ENCODE measurements at regions of chr1 and their contacts with region 1.

Region 1: GRCh38 chr1:15046487-15047165 is 106.9 kb upstream of the TMEM51 start:
- DNase-seq: peak; percentile 67
- H3K4me3 ChIP-seq: no peak overlapping the region
- H3K27ac ChIP-seq: no peak overlapping the region
- H3K4me1 ChIP-seq: peaks cover 4% of the 10 kb centered on the region
- H3K27me3 ChIP-seq: no peaks in the 10 kb centered on the region
- CTCF ChIP-seq: peak; percentile 86 to 98

Region 2: DNA sequence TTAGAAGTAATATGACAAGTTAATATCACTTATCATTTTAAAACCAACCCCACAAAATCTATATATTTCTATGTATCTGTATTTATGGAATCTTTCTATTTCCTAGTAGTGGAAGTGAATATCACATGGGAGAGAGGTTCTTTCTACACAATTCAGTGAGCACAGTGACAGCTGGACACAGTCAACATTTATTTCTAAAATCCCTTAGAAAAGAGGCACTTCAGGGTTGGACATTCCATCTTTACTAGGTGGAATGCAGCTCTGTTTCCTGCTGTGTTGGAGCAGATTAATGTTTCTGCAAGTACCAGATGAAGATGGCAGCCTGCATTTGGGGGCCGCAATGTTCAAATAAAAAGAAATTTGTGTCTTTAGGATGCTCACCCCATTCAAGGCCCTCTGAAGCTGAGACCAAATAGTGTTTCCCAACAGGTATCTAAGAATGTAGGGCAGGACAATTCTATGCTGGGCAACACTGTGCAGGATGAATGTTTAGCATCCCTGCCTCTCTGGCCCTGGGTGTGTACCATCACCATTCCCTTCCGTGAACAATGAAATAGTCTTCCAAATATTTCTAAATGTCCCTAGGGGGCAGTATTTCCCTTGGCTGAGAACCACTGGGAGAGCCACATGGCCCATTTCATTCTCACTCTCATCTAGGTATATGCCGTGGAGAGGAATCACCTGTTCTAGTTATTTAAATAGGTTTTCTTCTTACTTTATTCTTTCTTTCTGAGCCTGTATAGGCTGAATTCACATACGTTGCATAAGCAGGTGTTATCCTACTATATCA is 951.8 kb before region 1 on chr1:
- CTCF ChIA-PET with region 1: no interaction called
- dilution Hi-C with region 1: no loop called
- in situ Hi-C with region 1: loop called (anchors 25 kb)
- intact Hi-C with region 1: loop called (anchors 5 kb)
- DNase-seq: peak; percentile 9
- H3K4me3 ChIP-seq: no peak overlapping the region
- H3K27ac ChIP-seq: no peak overlapping the region
- H3K4me1 ChIP-seq: no peaks in the 10 kb centered on the region
- H3K27me3 ChIP-seq: no peaks in the 10 kb centered on the region
- CTCF ChIP-seq: peak; percentile 40 to 51

Region 3: GRCh38 chr1:14598497-14599172 is 448.0 kb before region 1 on chr1 and contains the start of gene KAZN:
- CTCF ChIA-PET with region 1: no interaction called
- dilution Hi-C with region 1: no loop called
- in situ Hi-C with region 1: loop called in 1 of 2 experiments (anchors 25 kb)
- intact Hi-C with region 1: no loop called
- DNase-seq: no peak
- H3K4me3 ChIP-seq: peak within 1 kb of the TSS in 2 of 3 experiments; percentile 8 to 27
- H3K27ac ChIP-seq: no peak within 1 kb of the TSS
- H3K4me1 ChIP-seq: peaks cover 10% of the 10 kb centered on the region
- H3K27me3 ChIP-seq: peaks cover 26% of the 10 kb centered on the region
- CTCF ChIP-seq: no peak
- total RNA-seq, gene KAZN: 13.8 to 17.6 TPM

Region 4: DNA sequence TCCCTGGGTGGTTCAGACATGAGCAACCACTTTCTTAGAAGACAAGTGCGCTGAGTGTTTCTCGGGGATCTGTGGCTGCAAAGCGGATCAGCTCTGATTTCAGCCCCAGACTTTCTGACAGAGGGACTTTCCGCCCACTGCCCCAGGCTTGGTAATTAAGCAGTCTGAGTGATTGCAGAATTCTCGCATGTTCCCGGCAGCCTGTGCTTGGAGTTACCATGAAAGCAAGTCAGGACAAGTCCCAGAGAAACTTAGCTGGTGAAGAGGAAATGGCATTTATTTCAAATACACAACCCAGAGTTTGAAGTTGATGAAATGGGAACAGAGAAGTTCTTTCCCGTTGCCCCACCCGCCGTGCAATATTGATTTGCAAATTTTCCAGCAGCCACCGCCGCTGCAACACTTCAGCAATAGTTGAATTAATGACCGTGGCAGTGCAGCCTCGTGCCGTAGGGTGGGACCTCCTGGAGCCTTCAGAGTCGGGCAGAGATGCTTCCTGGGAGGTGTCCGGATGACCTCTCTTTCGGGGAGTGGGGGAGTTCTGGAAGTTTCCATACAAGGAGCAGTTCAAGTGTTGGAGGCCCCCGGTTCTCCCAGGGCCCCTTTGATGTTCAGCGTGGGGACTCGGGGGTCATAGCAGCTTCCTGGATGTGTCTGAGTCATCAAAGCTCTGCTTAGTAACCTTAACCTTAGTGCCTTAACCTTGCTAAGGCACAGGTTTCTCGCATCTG is 313.4 kb before region 1 on chr1:
- CTCF ChIA-PET with region 1: no interaction called
- dilution Hi-C with region 1: no loop called
- in situ Hi-C with region 1: no loop called
- intact Hi-C with region 1: loop called (anchors 1 kb)
- DNase-seq: peak; percentile 96
- H3K4me3 ChIP-seq: peak overlapping the region; percentile 1 to 26 (median 9)
- H3K27ac ChIP-seq: peak overlapping the region; percentile 98
- H3K4me1 ChIP-seq: peaks cover 27% of the 10 kb centered on the region
- H3K27me3 ChIP-seq: no peaks in the 10 kb centered on the region
- CTCF ChIP-seq: no peak

Region 5: GRCh38 chr1:14778898-14779865 is 267.4 kb before region 1 on chr1:
- CTCF ChIA-PET with region 1: interaction called, 7 read pairs
- dilution Hi-C with region 1: no loop called
- in situ Hi-C with region 1: loop called in 1 of 2 experiments (anchors 25 kb)
- intact Hi-C with region 1: loop called (anchors 1 kb)
- DNase-seq: no peak
- H3K4me3 ChIP-seq: no peak overlapping the region
- H3K27ac ChIP-seq: no peak overlapping the region
- H3K4me1 ChIP-seq: no peaks in the 10 kb centered on the region
- H3K27me3 ChIP-seq: no peaks in the 10 kb centered on the region
- CTCF ChIP-seq: peak; percentile 72 to 78

Region 6: DNA sequence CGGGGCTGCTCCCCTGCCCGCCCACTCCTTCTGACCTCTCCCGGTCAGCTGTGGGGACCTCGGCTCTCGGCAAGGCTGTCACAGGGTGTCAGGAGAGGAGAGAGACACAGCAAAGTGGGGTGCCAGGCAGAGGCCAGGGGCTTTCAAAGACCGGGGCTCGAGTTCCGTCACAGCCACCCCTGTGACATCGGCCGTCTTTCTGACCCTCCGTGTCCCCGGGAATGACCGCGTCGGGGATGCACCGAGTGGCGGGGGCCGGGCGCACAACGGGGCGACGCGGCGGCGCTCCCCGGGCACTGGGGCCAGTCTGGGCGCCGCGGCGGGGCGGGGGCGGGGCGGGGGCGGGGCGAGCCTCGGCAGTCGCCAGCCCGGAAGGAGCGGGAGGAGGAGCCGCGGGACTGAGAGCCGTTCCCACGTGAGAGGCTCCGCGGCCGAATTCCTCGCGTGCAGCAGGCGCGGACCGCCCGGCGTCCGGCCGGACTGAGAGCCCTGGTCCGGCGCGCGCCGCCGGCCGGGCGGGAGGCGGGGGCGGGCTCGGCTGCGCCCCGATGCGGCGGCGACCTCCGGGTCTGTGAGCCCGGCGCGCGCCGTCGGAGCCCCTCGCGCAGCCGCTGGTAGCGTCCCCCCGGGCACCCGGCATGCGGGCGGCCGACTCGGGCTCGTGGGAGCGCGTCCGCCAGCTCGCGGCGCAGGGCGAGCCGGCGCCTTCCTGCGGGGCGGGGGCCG is 122.7 kb before region 1 on chr1:
- CTCF ChIA-PET with region 1: no interaction called
- dilution Hi-C with region 1: no loop called
- in situ Hi-C with region 1: no loop called
- intact Hi-C with region 1: loop called (anchors 5 kb)
- DNase-seq: peak; percentile 53
- H3K4me3 ChIP-seq: peak overlapping the region in 2 of 3 experiments; percentile 81 to 82
- H3K27ac ChIP-seq: no peak overlapping the region
- H3K4me1 ChIP-seq: peaks cover 22% of the 10 kb centered on the region
- H3K27me3 ChIP-seq: no peaks in the 10 kb centered on the region
- CTCF ChIP-seq: no peak